Naive thymus-derived CD4-positive, alpha-beta T cell (primary cell): ENCODE measurements at regions of chr9 and their contacts with region 1.

Region 1: GRCh38 chr9:96327694-96328352 is 25.8 kb upstream of the HSD17B3 start:
- DNase-seq: peak in 8 of 9 donors; percentile 18 to 70 (median 54)
- ATAC-seq: peak; percentile 87
- H3K4me3 ChIP-seq: no peak overlapping the region
- H3K4me3 Mint-ChIP-seq: no peak overlapping the region
- H3K27ac ChIP-seq: no peak overlapping the region
- H3K27ac Mint-ChIP-seq: no peak overlapping the region
- H3K4me1 ChIP-seq: no peaks in the 10 kb centered on the region
- H3K4me1 Mint-ChIP-seq: no peaks in the 10 kb centered on the region
- H3K27me3 ChIP-seq: no peaks in the 10 kb centered on the region
- H3K27me3 Mint-ChIP-seq: no peaks in the 10 kb centered on the region

Region 2: GRCh38 chr9:96398582-96399324 is 70.9 kb after region 1 on chr9:
- CTCF ChIA-PET with region 1: interaction called, 6 read pairs
- POLR2A ChIA-PET with region 1: interaction called, 9 read pairs
- intact Hi-C with region 1: loop called in 1 of 2 experiments (anchors 5 kb)
- DNase-seq: peak in 6 of 9 donors; percentile 18 to 47 (median 28)
- ATAC-seq: peak; percentile 75
- H3K4me3 ChIP-seq: peak overlapping the region; percentile 28
- H3K4me3 Mint-ChIP-seq: peak overlapping the region; percentile 58 to 73 (median 68)
- H3K27ac ChIP-seq: peak overlapping the region; percentile 59
- H3K27ac Mint-ChIP-seq: peak overlapping the region; percentile 49 to 96 (median 91)
- H3K4me1 ChIP-seq: peaks cover 16 to 18% of the 10 kb centered on the region in 2 donors
- H3K4me1 Mint-ChIP-seq: peaks cover 15 to 32% (median 26%) of the 10 kb centered on the region in 7 donors
- H3K27me3 ChIP-seq: no peaks in the 10 kb centered on the region
- H3K27me3 Mint-ChIP-seq: no peaks in the 10 kb centered on the region

Region 3: DNA sequence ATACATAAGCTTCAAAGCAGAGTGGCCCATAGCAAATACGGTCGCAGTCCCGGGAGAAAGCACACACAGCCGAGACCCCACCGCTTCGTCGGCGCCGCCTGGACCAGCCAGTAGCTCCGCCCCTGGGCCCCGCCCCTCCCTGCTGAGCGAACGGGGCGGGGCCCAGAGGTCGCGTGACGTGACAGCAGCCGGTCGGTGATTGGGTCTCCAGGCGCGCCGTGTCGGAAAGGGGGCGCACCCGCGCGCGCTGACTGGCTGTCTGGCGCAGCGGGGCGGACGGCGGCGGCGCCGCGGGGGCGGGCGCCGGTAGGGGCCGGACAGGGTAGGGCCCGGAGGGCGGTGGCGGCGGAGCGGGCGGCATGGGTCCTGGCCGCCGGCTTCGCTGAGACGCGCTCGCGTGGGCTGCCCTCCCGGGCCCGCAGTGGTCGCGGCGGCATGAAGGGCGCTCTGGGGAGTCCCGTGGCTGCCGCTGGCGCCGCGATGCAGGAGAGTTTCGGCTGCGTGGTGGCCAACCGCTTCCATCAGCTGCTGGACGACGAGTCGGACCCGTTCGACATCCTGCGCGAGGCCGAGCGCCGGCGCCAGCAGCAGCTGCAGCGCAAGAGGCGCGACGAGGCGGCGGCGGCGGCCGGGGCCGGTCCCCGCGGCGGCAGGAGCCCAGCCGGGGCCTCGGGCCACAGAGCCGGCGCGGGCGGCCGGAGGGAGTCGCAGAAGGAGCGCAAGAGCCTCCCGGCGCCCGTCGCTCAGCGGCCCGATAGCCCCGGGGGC is 122.2 kb after region 1 on chr9 and contains the start of gene HABP4:
- CTCF ChIA-PET with region 1: interaction called, 5 read pairs
- POLR2A ChIA-PET with region 1: interaction called, 3 read pairs
- intact Hi-C with region 1: loop called in 1 of 2 experiments (anchors 1 kb)
- DNase-seq: peak; percentile 90 to 97 (median 95)
- ATAC-seq: peak; percentile 98
- H3K4me3 ChIP-seq: peak within 1 kb of the TSS; percentile 77
- H3K4me3 Mint-ChIP-seq: peak within 1 kb of the TSS; percentile 88 to 99 (median 93)
- H3K27ac ChIP-seq: peak within 1 kb of the TSS; percentile 74
- H3K27ac Mint-ChIP-seq: peak within 1 kb of the TSS; percentile 74 to 98 (median 94)
- H3K4me1 ChIP-seq: peaks cover 5 to 14% of the 10 kb centered on the region in 2 donors
- H3K4me1 Mint-ChIP-seq: peaks cover 19 to 33% (median 26%) of the 10 kb centered on the region in 7 donors
- H3K27me3 ChIP-seq: no peaks in the 10 kb centered on the region
- H3K27me3 Mint-ChIP-seq: peaks cover 0 to 41% (median 6%) of the 10 kb centered on the region in 5 donors
- total RNA-seq, gene HABP4: 6.6 to 40.3 (median 23.9) TPM

Region 4: DNA sequence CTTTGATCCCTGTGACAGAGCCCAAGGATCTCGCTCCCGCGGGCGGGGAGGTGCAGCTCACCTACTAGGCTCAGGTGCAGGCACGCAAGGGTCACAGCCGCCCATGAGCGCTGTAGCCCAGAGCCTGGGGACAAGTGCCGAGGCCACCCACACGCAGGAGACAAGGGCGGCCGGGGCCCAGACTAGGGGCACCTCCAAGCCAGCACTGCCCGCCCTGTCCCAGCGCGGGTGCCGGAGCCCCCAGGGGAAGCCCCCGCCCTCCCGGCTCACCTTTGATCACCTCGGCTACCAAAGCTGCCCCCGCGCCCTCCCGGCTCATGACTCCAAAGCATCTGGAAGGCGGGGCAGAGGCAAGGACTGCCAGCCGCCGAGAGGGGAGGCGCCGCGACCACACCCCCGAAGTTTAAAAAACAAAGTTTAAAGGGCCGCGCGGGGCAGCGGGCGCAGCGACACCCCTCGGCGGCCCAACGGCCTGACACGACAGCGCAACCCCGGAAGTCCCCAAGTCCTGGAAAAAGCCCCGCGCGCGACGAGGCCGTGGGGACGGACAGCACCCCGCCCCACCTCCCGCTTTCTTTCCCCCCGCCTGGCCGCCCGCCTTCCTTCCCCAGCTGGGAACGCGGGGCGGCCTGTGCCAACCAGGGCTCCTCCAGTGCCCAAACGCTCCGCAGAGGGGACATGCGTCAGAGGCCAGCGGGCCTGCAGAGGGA is 238.8 kb after region 1 on chr9:
- CTCF ChIA-PET with region 1: interaction called, 7 read pairs
- POLR2A ChIA-PET with region 1: interaction called, 3 read pairs
- intact Hi-C with region 1: loop called in 1 of 2 experiments (anchors 1 kb)
- DNase-seq: peak; percentile 64 to 81 (median 78)
- ATAC-seq: peak; percentile 92
- H3K4me3 ChIP-seq: peak overlapping the region; percentile 77
- H3K4me3 Mint-ChIP-seq: peak overlapping the region; percentile 83 to 95 (median 89)
- H3K27ac ChIP-seq: peak overlapping the region; percentile 89
- H3K27ac Mint-ChIP-seq: peak overlapping the region; percentile 52 to 91 (median 84)
- H3K4me1 ChIP-seq: peaks cover 8 to 16% of the 10 kb centered on the region in 2 donors
- H3K4me1 Mint-ChIP-seq: peaks cover 6 to 31% (median 29%) of the 10 kb centered on the region in 7 donors
- H3K27me3 ChIP-seq: no peaks in the 10 kb centered on the region
- H3K27me3 Mint-ChIP-seq: peaks cover 0 to 36% (median 3%) of the 10 kb centered on the region in 5 donors

Region 5: GRCh38 chr9:96777426-96777864 is 449.6 kb after region 1 on chr9:
- CTCF ChIA-PET with region 1: no interaction called
- POLR2A ChIA-PET with region 1: interaction called, 4 read pairs
- intact Hi-C with region 1: loop called in 1 of 2 experiments (anchors 10 kb)
- DNase-seq: peak in 5 of 9 donors; percentile 18 to 47 (median 29)
- ATAC-seq: peak; percentile 28
- H3K4me3 ChIP-seq: peak overlapping the region; percentile 84
- H3K4me3 Mint-ChIP-seq: peak overlapping the region; percentile 91 to 100 (median 98)
- H3K27ac ChIP-seq: peak overlapping the region; percentile 92
- H3K27ac Mint-ChIP-seq: peak overlapping the region; percentile 94 to 100 (median 98)
- H3K4me1 ChIP-seq: peaks cover 6 to 12% of the 10 kb centered on the region in 2 donors
- H3K4me1 Mint-ChIP-seq: peaks cover 12 to 64% (median 58%) of the 10 kb centered on the region in 7 donors
- H3K27me3 ChIP-seq: no peaks in the 10 kb centered on the region
- H3K27me3 Mint-ChIP-seq: no peaks in the 10 kb centered on the region